A549 (cell line): ENCODE measurements at regions of chr19 and their contacts with region 1.

Region 1: GRCh38 chr19:14405758-14406644 is 13.1 kb downstream of the DDX39A start:
- DNase-seq: peak; percentile 71 to 88
- ATAC-seq: peak; percentile 47 to 75
- H3K4me3 ChIP-seq: no peak overlapping the region
- H3K27ac ChIP-seq: peak overlapping the region in 1 of 2 experiments; percentile 56; a peak in 1 of 6 replicates
- H3K4me1 ChIP-seq: no peaks in the 10 kb centered on the region
- CTCF ChIP-seq: peak; percentile 60
- EP300 ChIP-seq: no peak
- POLR2A ChIP-seq: no peak
- RAD21 ChIP-seq: peak; percentile 64 to 70

Region 2: DNA sequence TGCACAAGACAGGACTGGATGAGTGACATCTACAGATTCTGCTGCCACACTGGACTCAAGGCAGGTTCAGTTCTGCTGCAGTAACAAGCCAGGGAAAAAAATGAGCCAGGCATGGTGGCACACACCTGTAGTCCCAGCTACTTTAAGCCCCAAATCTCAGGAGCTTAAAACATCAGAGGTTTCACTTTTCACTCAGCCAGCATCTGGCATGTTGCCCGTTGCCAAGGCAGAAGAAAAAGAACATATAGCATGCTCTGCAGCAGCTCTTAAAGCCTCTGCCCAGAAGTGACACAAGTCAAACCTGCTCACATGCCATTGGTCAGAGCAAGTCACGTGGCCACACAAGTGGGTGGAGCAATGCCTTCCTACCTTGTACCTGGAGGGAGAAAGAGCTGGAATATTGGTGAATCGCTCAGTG is 39.5 kb before region 1 on chr19:
- CTCF ChIA-PET with region 1: interaction called, 22 read pairs
- POLR2A ChIA-PET with region 1: interaction called, 3 read pairs
- DNase-seq: peak in 1 of 2 experiments; percentile 84
- ATAC-seq: peak in 1 of 2 experiments; percentile 54; a peak in 3 of 6 replicates
- H3K4me3 ChIP-seq: no peak overlapping the region
- H3K27ac ChIP-seq: no peak overlapping the region
- H3K4me1 ChIP-seq: peaks cover 13% of the 10 kb centered on the region; the same call in 1 of the 3 replicates
- CTCF ChIP-seq: no peak
- EP300 ChIP-seq: no peak
- POLR2A ChIP-seq: no peak
- RAD21 ChIP-seq: no peak

Region 3: DNA sequence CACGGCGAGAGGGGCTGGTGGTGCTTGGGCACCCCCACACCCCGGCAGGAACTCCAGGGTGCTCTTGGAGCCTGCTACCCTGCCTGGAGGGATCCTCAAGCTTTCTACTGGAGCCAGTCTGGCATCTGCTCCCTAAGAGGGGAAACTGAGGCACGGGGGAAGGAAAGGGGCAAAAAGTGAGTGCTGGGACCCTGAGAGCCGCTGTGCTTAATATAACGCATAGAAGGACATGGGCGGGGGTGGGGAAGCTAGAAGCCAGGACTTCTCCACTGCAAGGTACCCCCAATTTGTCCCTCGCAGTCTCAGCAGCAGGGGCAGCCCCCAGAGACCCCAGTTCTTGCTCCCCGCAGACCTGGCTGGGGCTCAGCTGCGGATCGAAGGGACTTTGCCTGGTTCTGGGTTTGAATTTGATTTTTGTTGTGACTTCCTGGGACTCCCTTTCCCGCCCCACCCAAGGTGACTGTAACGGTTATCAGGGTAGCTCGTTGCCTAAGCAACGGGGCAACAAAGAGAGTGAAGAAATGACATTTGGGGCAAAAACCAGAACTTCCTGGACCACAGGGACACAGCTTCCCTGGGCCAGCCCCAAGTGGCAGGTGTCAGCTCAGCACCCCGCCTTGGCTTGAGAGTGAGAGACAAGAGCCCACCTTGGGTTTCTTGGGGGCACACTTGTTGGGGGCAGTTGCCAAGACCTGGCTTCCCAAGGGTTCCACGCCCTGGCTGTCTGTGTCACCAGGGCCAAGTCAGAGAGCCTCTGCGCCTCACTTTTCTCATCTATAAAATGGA is 24.1 kb before region 1 on chr19:
- CTCF ChIA-PET with region 1: interaction called, 11 read pairs
- POLR2A ChIA-PET with region 1: interaction called, 3 read pairs
- DNase-seq: peak in 1 of 2 experiments; percentile 77
- ATAC-seq: peak; percentile 68 to 74
- H3K4me3 ChIP-seq: peak overlapping the region; percentile 84
- H3K27ac ChIP-seq: peak overlapping the region; percentile 94
- H3K4me1 ChIP-seq: peaks cover 34% of the 10 kb centered on the region
- CTCF ChIP-seq: no peak
- EP300 ChIP-seq: no peak
- POLR2A ChIP-seq: no peak
- RAD21 ChIP-seq: no peak

Region 4: DNA sequence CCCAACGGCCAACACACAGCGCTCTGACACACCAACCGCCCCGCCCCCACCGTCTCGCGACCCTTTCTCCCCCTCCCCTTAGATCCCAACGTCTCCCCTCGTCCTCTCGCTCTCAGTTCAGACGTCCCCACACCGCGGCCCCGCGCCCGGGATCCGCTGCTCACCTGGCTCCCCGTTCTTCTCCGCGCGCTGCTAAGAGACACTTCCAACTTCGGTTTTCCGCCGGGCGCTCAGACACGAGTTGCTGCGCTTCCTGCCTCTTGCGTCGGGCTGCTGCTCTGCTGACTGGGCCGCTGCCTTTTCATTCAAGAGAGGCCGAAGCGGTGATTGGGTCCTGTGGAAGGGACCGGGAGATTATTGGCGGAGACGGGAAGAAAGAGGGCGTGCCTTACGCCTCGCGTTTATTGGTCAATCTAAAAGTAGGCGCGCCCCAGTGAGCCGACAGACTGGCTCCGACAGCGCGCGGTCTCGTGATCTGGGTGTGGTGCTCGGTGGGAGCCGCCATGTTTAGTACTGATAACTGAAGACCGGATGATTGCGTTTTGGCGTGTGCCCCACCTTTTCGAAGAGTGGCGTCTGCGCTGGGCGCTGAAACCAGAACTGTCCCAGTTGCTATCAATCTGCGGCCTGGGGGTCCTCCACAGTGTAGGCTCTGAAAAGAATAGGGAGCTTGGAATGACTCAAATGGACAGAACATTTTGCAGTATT is 13.3 kb after region 1 on chr19 and contains the start of gene DDX39A:
- CTCF ChIA-PET with region 1: interaction called, 11 read pairs
- POLR2A ChIA-PET with region 1: no interaction called
- DNase-seq: peak; percentile 94 to 99
- ATAC-seq: peak; percentile 98 to 100
- H3K4me3 ChIP-seq: peak within 1 kb of the TSS; percentile 92
- H3K27ac ChIP-seq: peak within 1 kb of the TSS; percentile 93 to 97
- H3K4me1 ChIP-seq: peaks cover 18% of the 10 kb centered on the region
- CTCF ChIP-seq: no peak
- EP300 ChIP-seq: no peak
- POLR2A ChIP-seq: no peak; the same call in 1 of the 2 replicates
- RAD21 ChIP-seq: no peak
- polyA plus RNA-seq, gene DDX39A: 57.9 and 59.0 TPM in 2 replicates

Region 5: DNA sequence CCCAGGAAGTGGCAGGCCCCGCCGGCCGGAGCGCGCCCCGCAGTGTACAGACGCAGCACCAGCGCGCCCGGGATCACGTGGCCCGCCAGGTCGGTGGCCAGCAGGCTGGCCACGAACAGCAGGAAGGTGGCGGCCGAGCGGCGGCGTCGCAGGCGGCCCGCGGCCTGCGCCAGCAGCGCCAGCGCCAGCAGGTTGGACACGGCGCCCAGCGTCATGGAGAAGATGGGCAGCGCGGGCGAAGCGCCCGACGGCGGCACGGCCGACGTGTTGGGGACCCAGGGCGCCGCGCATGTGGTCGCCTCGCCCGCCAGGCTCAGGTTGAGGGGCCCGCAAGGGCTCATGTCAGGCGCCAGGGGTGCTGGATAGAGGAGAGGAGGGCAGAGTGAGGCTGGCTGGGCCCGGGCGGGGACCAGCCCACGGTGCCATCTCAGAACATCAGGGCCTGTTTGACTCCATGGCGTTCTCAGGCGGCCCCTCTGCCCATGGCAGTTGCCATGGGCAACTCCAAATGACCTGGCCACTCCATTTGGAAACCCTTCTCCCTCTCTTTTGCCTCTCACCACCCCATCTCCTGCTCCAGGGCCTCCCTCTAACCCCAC is 68.1 kb after region 1 on chr19:
- CTCF ChIA-PET with region 1: no interaction called
- POLR2A ChIA-PET with region 1: no interaction called
- DNase-seq: no peak
- ATAC-seq: no peak
- H3K4me3 ChIP-seq: no peak overlapping the region
- H3K27ac ChIP-seq: no peak overlapping the region; a peak in 1 of 6 replicates
- H3K4me1 ChIP-seq: peaks cover 35% of the 10 kb centered on the region
- CTCF ChIP-seq: no peak
- EP300 ChIP-seq: no peak
- POLR2A ChIP-seq: no peak
- RAD21 ChIP-seq: no peak